Ascending aorta (tissue), 2 donors: ENCODE measurements at regions of chr5 and their contacts with region 1.

Region 1: DNA sequence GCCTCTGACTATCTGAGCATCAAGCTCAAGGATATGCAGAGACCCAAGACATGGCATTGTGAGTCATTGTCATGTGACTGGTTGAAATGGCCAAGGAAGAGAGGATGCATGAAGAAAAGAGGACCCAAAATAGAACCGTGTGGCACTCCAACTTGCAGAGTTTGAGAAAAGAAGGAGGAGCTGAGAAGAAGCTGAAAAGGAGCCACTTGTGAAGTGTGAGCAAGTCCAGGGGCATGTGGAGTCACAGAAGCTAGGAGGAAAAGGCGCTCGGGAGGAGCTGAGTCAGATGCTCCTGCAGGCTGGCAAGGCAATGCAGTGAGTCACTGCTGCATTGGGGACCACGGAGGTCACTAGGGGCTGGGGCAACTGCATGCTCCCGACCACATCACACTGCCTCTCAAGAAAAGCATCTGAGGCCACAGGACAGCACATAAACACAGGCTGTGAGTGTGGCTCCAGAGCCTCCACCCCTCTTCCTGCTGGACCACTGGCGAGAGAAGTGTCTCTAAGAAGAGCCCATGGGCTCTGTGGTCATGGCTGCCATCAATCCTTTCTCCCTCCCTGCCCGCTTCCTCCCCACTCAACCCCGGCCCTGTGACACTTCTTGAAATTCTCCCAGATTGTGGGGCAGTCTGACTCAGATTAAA is 197.6 kb downstream of the DRD1 start:
- DNase-seq: peak; percentile 15 to 85
- H3K4me3 ChIP-seq: no peak overlapping the region
- H3K27ac ChIP-seq: peak overlapping the region; percentile 69 to 77
- H3K4me1 ChIP-seq: peaks cover 0 to 9% of the 10 kb centered on the region in 2 donors
- H3K27me3 ChIP-seq: no peaks in the 10 kb centered on the region
- CTCF ChIP-seq: no peak

Region 2: DNA sequence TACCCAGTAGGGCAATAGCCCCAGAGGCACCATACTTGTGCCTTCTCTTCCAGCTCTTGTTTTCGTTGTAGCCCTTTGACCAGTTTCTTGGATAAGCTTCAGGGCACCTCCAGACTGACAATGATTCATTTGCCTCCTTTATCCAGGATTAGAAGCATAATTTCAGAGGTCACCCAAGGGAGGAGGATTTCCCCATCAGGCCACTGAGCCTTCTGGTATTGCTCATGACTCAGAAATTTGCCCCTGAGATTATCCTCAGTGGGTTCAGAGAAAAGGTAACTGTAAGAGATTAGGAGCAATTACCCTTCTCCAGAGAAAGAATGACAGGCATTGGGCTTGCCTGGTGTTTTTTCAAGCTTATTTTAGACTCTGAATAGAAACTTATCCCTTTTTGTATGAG is 374.1 kb before region 1 on chr5:
- intact Hi-C with region 1: no loop called
- DNase-seq: no peak
- H3K4me3 ChIP-seq: no peak overlapping the region
- H3K27ac ChIP-seq: no peak overlapping the region
- H3K4me1 ChIP-seq: no peaks in the 10 kb centered on the region
- H3K27me3 ChIP-seq: no peaks in the 10 kb centered on the region
- CTCF ChIP-seq: no peak

Region 3: DNA sequence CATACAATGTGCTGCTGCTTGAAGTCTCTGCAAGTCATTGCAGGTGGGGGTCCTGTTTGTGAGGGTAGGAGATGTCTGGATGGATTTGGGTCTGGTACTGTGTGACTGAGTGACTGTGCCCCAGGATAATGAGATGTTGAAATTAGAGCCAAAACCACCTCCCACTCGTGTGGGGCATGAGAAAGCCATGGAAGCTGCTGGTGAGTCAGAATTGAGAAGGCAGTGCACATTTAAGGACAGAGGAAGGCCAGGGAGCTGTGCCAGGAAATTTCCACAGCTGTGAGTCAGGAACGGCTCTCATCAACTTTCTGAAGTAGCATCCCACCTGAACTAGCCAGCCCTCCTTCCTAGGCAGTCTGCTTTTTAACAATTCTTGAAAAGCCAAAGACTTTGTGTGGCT is 32.2 kb before region 1 on chr5:
- intact Hi-C with region 1: loop called (anchors 1 kb)
- DNase-seq: peak; percentile 54 to 92
- H3K4me3 ChIP-seq: no peak overlapping the region
- H3K27ac ChIP-seq: no peak overlapping the region
- H3K4me1 ChIP-seq: peaks cover 10 to 45% of the 10 kb centered on the region in 2 donors
- H3K27me3 ChIP-seq: no peaks in the 10 kb centered on the region
- CTCF ChIP-seq: no peak

Region 4: GRCh38 chr5:175235251-175235960 is 11.0 kb before region 1 on chr5:
- intact Hi-C with region 1: no loop called
- DNase-seq: no peak
- H3K4me3 ChIP-seq: no peak overlapping the region
- H3K27ac ChIP-seq: no peak overlapping the region
- H3K4me1 ChIP-seq: no peaks in the 10 kb centered on the region
- H3K27me3 ChIP-seq: no peaks in the 10 kb centered on the region
- CTCF ChIP-seq: no peak

Region 5: GRCh38 chr5:175264406-175264805 is 18.0 kb after region 1 on chr5:
- intact Hi-C with region 1: no loop called
- DNase-seq: no peak
- H3K4me3 ChIP-seq: no peak overlapping the region
- H3K27ac ChIP-seq: no peak overlapping the region
- H3K4me1 ChIP-seq: no peaks in the 10 kb centered on the region
- H3K27me3 ChIP-seq: no peaks in the 10 kb centered on the region
- CTCF ChIP-seq: no peak

Region 6: DNA sequence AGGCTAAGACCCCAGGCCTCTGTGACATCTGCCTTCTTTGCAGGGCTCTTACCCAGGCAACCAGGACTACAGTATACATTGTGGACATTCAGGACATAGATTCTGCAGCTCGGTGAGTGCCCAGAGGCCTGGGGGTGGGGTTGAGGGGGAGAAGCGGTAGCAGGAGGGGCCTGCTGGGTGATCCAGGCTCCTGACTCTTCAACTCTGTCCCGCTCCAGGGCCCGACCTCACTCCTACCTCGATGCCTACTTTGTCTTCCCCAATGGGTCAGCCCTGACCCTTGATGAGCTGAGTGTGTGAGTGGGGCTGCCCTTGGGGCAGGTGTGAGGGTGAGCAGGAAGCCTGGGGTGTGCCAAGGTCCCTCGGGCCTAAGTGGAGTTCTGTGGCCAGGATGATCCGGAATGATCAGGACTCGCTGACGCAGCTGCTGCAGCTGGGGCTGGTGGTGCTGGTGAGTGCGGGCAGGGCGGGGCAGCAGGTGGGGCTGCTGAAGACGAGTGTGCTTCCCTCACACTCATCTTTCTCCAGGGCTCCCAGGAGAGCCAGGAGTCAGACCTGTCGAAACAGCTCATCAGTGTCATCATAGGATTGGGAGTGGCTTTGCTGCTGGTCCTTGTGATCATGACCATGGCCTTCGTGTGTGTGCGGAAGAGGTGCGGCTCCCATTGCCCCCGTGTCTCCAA is 1343.8 kb after region 1 on chr5:
- intact Hi-C with region 1: no loop called
- DNase-seq: no peak
- H3K4me3 ChIP-seq: no peak overlapping the region
- H3K27ac ChIP-seq: no peak overlapping the region
- H3K4me1 ChIP-seq: no peaks in the 10 kb centered on the region
- H3K27me3 ChIP-seq: no peaks in the 10 kb centered on the region
- CTCF ChIP-seq: no peak